Naive thymus-derived CD8-positive, alpha-beta T cell (primary cell): ENCODE measurements at regions of chr17 and their contacts with region 1.

Region 1: GRCh38 chr17:17612085-17613022 is 20.8 kb upstream of the PEMT start:
- DNase-seq: no peak
- ATAC-seq: no peak
- H3K4me3 Mint-ChIP-seq: no peak overlapping the region
- H3K27ac Mint-ChIP-seq: peak overlapping the region in 1 of 10 donors; percentile 58
- H3K4me1 Mint-ChIP-seq: peaks cover 0 to 8% (median 2%) of the 10 kb centered on the region in 4 donors
- H3K27me3 Mint-ChIP-seq: peaks cover 0 to 2% (median 0%) of the 10 kb centered on the region in 5 donors

Region 2: GRCh38 chr17:17223736-17224135 is 388.6 kb before region 1 on chr17:
- POLR2A ChIA-PET with region 1: interaction called, 11 read pairs
- DNase-seq: no peak
- ATAC-seq: no peak
- H3K4me3 Mint-ChIP-seq: no peak overlapping the region
- H3K27ac Mint-ChIP-seq: no peak overlapping the region
- H3K4me1 Mint-ChIP-seq: peaks cover 0 to 4% (median 0%) of the 10 kb centered on the region in 4 donors
- H3K27me3 Mint-ChIP-seq: no peaks in the 10 kb centered on the region

Region 3: GRCh38 chr17:17685775-17686291 is 73.5 kb after region 1 on chr17:
- POLR2A ChIA-PET with region 1: no interaction called
- DNase-seq: no peak
- ATAC-seq: no peak
- H3K4me3 Mint-ChIP-seq: peak overlapping the region in 8 of 10 donors; percentile 22 to 61 (median 48)
- H3K27ac Mint-ChIP-seq: peak overlapping the region in 9 of 10 donors; percentile 66 to 94 (median 83)
- H3K4me1 Mint-ChIP-seq: peaks cover 25 to 60% (median 52%) of the 10 kb centered on the region in 4 donors
- H3K27me3 Mint-ChIP-seq: no peaks in the 10 kb centered on the region